Posterior vena cava (tissue), 2 donors: ENCODE measurements at regions of chr7 and their contacts with region 1.

Region 1: GRCh38 chr7:89042940-89043339 is 247.4 kb upstream of the TEX47 start:
- DNase-seq: no peak

Region 2: GRCh38 chr7:88951826-88952225 is 91.1 kb before region 1 on chr7:
- intact Hi-C with region 1: no loop called
- DNase-seq: no peak

Region 3: GRCh38 chr7:89072081-89072480 is 29.1 kb after region 1 on chr7:
- intact Hi-C with region 1: no loop called
- DNase-seq: no peak

Region 4: DNA sequence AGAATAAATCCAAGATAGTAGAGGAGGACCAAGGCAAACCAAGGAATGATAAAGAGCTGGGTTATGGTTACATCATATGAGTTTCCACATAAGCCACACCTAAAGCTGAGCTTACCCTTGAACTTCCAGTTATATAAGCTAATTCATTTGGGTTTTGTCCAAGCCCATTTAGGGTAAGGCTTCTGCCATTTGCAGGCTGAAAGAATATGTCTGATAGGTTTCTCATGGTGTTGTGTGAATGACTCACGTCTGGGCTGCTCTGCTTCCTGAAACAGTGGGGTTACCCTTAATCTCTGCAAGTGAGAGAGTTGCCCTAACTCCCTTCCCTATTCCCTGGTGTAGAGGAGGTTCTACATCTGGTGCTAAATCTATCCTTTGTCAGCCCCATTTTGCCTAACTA is 1487.3 kb after region 1 on chr7:
- intact Hi-C with region 1: loop called in 1 of 2 experiments (anchors 5 kb)
- DNase-seq: no peak